GM12878 (cell line): ENCODE measurements at regions of chr11 and their contacts with region 1.

Region 1: DNA sequence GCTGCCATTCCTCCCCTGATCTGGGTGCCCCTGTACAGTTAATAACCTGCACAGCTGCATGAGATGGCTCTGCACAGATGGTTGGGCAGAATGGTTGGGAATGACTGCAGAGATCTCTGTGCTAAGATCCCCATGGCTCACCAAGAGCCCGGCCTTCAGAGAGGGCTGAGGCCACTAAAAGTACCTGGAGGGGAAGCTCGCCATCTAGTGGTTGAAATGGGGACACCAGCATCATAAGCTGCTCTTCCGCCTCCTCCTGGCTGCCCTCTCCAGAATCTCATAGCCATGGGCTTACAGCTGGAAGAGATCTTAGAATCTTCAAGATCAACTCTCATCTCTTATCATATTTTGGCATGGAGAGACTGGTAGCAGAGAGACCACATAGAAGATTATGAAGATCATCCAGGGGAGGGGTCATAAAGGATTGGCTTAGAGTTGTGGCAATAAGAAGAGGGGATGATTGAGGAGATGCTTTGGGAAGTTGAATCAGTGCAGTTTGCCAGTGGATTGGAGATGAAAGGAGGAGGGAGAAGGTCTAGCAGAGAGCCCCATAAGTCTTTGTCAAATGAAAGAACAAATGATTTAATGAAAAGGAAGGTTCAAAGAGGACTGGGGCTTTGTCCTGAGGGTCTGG is 22.0 kb upstream of the TLCD5 start:
- DNase-seq: peak; percentile 37
- ATAC-seq: peak; percentile 92
- H3K4me3 ChIP-seq: no peak overlapping the region
- H3K27ac ChIP-seq: no peak overlapping the region
- H3K4me1 ChIP-seq: peaks cover 7% of the 10 kb centered on the region
- H3K27me3 ChIP-seq: no peaks in the 10 kb centered on the region
- CTCF ChIP-seq: peak; percentile 92 to 99 (median 98); a peak in 5 of 6 replicates
- EP300 ChIP-seq: no peak
- POLR2A ChIP-seq: no peak
- RAD21 ChIP-seq: peak; percentile 87

Region 2: GRCh38 chr11:120180551-120181232 is 122.4 kb before region 1 on chr11:
- CTCF ChIA-PET with region 1: interaction called, 83 read pairs
- POLR2A ChIA-PET with region 1: interaction called, 3 read pairs
- RAD21 ChIA-PET with region 1: interaction called, 5 read pairs
- SMC1A ChIA-PET with region 1: interaction called, 5 read pairs
- in situ Hi-C with region 1: no loop called
- intact Hi-C with region 1: no loop called
- DNase-seq: no peak
- ATAC-seq: no peak
- H3K4me3 ChIP-seq: no peak overlapping the region
- H3K27ac ChIP-seq: no peak overlapping the region
- H3K4me1 ChIP-seq: no peaks in the 10 kb centered on the region
- H3K27me3 ChIP-seq: peaks cover 3 to 6% of the 10 kb centered on the region in 2 experiments; a peak in 2 of 4 replicates
- CTCF ChIP-seq: no peak
- EP300 ChIP-seq: no peak
- POLR2A ChIP-seq: no peak
- RAD21 ChIP-seq: no peak

Region 3: GRCh38 chr11:120235024-120235861 is 67.9 kb before region 1 on chr11:
- CTCF ChIA-PET with region 1: interaction called, 783 read pairs
- POLR2A ChIA-PET with region 1: interaction called, 12 read pairs
- RAD21 ChIA-PET with region 1: interaction called, 348 read pairs
- SMC1A ChIA-PET with region 1: interaction called, 372 read pairs
- in situ Hi-C with region 1: loop called (anchors 5 kb)
- intact Hi-C with region 1: loop called (anchors 1 kb)
- DNase-seq: no peak
- ATAC-seq: peak; percentile 95
- H3K4me3 ChIP-seq: no peak overlapping the region
- H3K27ac ChIP-seq: no peak overlapping the region
- H3K4me1 ChIP-seq: peaks cover 3% of the 10 kb centered on the region; the same call in 1 of the 2 replicates
- H3K27me3 ChIP-seq: peaks cover 7 to 8% of the 10 kb centered on the region in 2 experiments
- CTCF ChIP-seq: peak; percentile 89 to 98 (median 95); a peak in 5 of 6 replicates
- EP300 ChIP-seq: no peak
- POLR2A ChIP-seq: no peak
- RAD21 ChIP-seq: peak; percentile 98

Region 4: GRCh38 chr11:120258661-120259060 is 44.5 kb before region 1 on chr11:
- CTCF ChIA-PET with region 1: interaction called, 296 read pairs
- POLR2A ChIA-PET with region 1: no interaction called
- RAD21 ChIA-PET with region 1: interaction called, 5 read pairs
- SMC1A ChIA-PET with region 1: interaction called, 13 read pairs
- in situ Hi-C with region 1: no loop called
- intact Hi-C with region 1: no loop called
- DNase-seq: no peak
- ATAC-seq: no peak
- H3K4me3 ChIP-seq: no peak overlapping the region
- H3K27ac ChIP-seq: no peak overlapping the region
- H3K4me1 ChIP-seq: peaks cover 9% of the 10 kb centered on the region
- H3K27me3 ChIP-seq: peaks cover 0 to 7% of the 10 kb centered on the region in 2 experiments; a peak in 3 of 4 replicates
- CTCF ChIP-seq: no peak
- EP300 ChIP-seq: no peak
- POLR2A ChIP-seq: no peak
- RAD21 ChIP-seq: no peak

Region 5: GRCh38 chr11:120289426-120289825 is 13.7 kb before region 1 on chr11:
- CTCF ChIA-PET with region 1: interaction called, 19 read pairs
- POLR2A ChIA-PET with region 1: no interaction called
- RAD21 ChIA-PET with region 1: interaction called, 3 read pairs
- SMC1A ChIA-PET with region 1: interaction called, 21 read pairs
- in situ Hi-C with region 1: no loop called
- intact Hi-C with region 1: no loop called
- DNase-seq: no peak
- ATAC-seq: no peak
- H3K4me3 ChIP-seq: no peak overlapping the region
- H3K27ac ChIP-seq: no peak overlapping the region
- H3K4me1 ChIP-seq: no peaks in the 10 kb centered on the region
- H3K27me3 ChIP-seq: no peaks in the 10 kb centered on the region; a peak in 1 of 4 replicates
- CTCF ChIP-seq: no peak
- EP300 ChIP-seq: no peak
- POLR2A ChIP-seq: no peak
- RAD21 ChIP-seq: no peak

Region 6: DNA sequence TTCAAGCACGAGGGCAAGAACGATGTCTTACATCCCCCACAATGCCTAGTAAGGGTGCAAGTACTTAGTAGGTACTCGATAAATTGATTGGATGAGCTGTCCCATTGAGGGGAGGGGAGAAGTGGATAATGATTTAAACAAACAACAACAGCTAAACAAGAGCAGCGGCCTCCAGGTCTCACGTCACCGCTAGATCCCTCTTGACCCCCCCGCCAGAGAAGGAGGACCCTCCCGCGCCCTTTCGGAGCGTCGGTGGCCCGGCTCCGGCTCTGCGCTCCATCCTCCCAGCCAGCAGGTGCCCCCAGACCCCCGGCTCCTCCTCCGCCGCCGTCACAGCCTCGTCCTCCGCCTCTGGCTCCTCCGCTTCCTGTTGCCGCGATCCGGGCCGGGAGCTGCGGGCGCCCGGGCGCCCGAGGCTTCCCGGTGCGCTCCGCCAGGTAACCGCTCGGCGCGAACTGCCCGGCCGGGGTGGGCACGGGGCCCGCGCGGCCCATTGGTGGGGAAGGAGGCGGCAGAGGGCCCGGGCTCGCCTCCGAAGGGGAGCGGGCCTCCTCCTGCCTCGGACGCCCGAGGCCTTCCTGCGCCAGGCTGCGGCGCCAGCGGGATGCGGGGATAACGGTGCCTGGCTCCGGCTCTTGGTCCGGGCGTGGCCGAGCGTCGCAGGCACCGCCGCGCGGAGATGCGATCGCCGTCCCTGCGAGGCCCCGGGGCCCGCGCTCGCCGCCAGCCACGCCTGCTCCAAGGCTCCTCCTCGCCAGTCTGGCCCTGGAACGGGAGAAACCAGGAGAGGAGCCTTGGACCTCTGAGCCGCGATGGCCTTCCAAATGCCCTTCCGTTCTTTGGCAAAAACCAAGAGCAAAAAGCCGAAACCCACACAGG is 22.1 kb after region 1 on chr11 and contains the start of gene TLCD5:
- CTCF ChIA-PET with region 1: interaction called, 25 read pairs
- POLR2A ChIA-PET with region 1: no interaction called
- RAD21 ChIA-PET with region 1: interaction called, 8 read pairs
- SMC1A ChIA-PET with region 1: interaction called, 15 read pairs
- in situ Hi-C with region 1: no loop called
- intact Hi-C with region 1: no loop called
- DNase-seq: no peak
- ATAC-seq: peak; percentile 87
- H3K4me3 ChIP-seq: peak within 1 kb of the TSS; percentile 72
- H3K27ac ChIP-seq: peak within 1 kb of the TSS; percentile 35
- H3K4me1 ChIP-seq: no peaks in the 10 kb centered on the region
- H3K27me3 ChIP-seq: no peaks in the 10 kb centered on the region; a peak in 2 of 4 replicates
- CTCF ChIP-seq: peak in 2 of 3 experiments; percentile 15 to 35; a peak in 3 of 6 replicates
- EP300 ChIP-seq: no peak
- POLR2A ChIP-seq: no peak
- RAD21 ChIP-seq: no peak
- polyA plus RNA-seq, gene TLCD5: 2.4 to 3.1 TPM

Region 7: GRCh38 chr11:120344302-120345004 is 41.3 kb after region 1 on chr11:
- CTCF ChIA-PET with region 1: no interaction called
- POLR2A ChIA-PET with region 1: no interaction called
- RAD21 ChIA-PET with region 1: no interaction called
- SMC1A ChIA-PET with region 1: no interaction called
- in situ Hi-C with region 1: no loop called
- intact Hi-C with region 1: no loop called
- DNase-seq: peak; percentile 91
- ATAC-seq: peak; percentile 82
- H3K4me3 ChIP-seq: peak overlapping the region; percentile 46
- H3K27ac ChIP-seq: peak overlapping the region; percentile 59
- H3K4me1 ChIP-seq: peaks cover 25% of the 10 kb centered on the region
- H3K27me3 ChIP-seq: no peaks in the 10 kb centered on the region
- CTCF ChIP-seq: no peak
- EP300 ChIP-seq: peak; percentile 75 to 90
- POLR2A ChIP-seq: no peak
- RAD21 ChIP-seq: no peak